ENCODE measurements at regions of chr16 and their contacts with region 1.

Region 1: GRCh38 chr16:3509470-3509928 is 8.7 kb downstream of the CLUAP1 start:
- DNase-seq: peak; percentile 92
- ATAC-seq: peak; percentile 89
- H3K4me3 Mint-ChIP-seq: no peak overlapping the region
- H3K27ac Mint-ChIP-seq: peak overlapping the region; percentile 86
- H3K4me1 Mint-ChIP-seq: peaks cover 56% of the 10 kb centered on the region
- H3K27me3 Mint-ChIP-seq: no peaks in the 10 kb centered on the region
- CTCF ChIP-seq: no peak

Region 2: DNA sequence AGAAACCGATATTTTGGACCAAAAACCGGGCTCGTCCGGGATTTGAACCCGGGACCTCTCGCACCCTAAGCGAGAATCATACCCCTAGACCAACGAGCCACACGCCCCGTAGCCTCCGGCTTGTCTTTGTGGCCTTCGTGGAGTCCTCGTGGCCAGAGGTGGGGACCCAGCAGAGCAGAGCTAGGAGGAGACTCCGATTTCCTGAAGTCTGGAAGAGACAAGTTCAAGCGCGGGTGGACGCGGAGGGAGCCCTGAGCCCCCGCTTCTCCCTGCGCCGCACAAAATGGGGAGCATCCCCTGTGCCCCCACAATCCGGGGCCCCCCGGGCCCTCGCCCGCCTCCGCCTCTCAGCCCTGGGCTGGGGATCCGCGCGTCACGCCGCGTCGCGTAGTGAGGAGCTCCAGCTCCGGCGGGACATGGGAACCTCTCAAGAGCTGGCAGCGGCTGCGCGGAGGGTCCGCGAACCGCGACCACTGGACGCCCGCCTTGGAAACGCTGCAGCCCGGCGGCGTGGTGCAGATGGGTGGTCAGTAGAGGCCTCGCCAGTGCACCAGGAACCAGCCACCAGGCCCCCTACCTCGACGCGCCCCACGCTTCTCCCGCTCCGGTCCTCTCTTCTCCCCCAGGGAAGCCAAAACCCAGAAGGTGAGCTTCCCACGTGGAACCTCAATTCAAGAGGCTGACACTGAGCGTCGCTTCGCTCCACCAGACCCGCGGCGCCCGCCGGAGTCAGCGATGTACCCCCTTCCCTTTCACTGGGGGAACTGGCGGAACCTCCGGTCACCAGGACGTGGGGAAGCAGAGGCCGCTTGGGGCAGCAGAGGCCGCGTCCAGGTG is 326.7 kb before region 1 on chr16:
- CTCF ChIA-PET with region 1: no interaction called
- POLR2A ChIA-PET with region 1: no interaction called
- intact Hi-C with region 1: loop called (anchors 10 kb)
- DNase-seq: peak; percentile 75
- ATAC-seq: peak; percentile 65
- H3K4me3 Mint-ChIP-seq: peak overlapping the region; percentile 83
- H3K27ac Mint-ChIP-seq: peak overlapping the region; percentile 62
- H3K4me1 Mint-ChIP-seq: peaks cover 25% of the 10 kb centered on the region
- H3K27me3 Mint-ChIP-seq: peaks cover 66% of the 10 kb centered on the region
- CTCF ChIP-seq: peak; percentile 47

Region 3: DNA sequence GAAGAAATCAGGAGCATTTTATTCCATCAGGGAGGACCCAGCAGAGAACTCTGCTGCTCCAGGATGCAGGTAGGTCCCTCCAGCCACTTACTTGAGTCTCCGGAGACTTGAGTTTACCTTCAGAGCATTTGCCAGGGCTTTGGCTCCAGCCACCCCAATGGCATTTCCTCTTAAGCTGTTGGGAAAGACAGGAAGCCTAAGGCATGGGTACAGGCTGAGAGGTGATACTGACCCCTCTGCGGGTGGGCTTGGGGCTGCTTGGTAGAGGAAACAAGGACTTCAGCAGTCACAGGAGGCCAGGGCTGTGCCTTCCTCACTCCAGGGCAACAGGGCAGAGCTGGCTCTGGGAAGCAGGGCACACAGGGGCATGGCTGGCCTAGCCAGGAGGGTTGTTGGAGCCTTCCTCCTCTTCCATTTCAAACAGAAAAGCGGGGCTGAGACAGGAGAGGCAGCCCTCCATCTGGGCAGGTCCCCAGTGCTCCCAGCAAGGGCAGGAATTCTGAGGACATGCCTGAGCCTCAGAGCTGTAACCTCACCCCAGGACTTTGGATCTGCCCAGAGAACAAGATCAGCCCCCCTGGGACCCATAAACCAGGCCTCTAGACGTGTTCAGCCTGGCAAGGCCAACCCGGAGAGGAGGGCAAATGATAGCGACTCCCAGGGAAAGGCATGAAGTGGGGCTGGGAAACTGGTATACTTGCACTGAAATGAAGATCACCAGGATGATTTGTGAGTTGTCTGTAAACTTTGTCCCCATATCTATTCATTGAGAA is 33.3 kb after region 1 on chr16:
- CTCF ChIA-PET with region 1: no interaction called
- POLR2A ChIA-PET with region 1: no interaction called
- intact Hi-C with region 1: no loop called
- DNase-seq: no peak
- ATAC-seq: no peak
- H3K4me3 Mint-ChIP-seq: no peak overlapping the region
- H3K27ac Mint-ChIP-seq: peak overlapping the region; percentile 16
- H3K4me1 Mint-ChIP-seq: no peaks in the 10 kb centered on the region
- H3K27me3 Mint-ChIP-seq: no peaks in the 10 kb centered on the region
- CTCF ChIP-seq: no peak

Region 4: GRCh38 chr16:3578610-3579551 is 69.4 kb after region 1 on chr16:
- CTCF ChIA-PET with region 1: no interaction called
- POLR2A ChIA-PET with region 1: no interaction called
- intact Hi-C with region 1: loop called (anchors 10 kb)
- DNase-seq: peak; percentile 93
- ATAC-seq: peak; percentile 64
- H3K4me3 Mint-ChIP-seq: peak overlapping the region; percentile 99
- H3K27ac Mint-ChIP-seq: peak overlapping the region; percentile 98
- H3K4me1 Mint-ChIP-seq: peaks cover 39% of the 10 kb centered on the region
- H3K27me3 Mint-ChIP-seq: no peaks in the 10 kb centered on the region
- CTCF ChIP-seq: no peak

Measured in activated CD8-positive, alpha-beta T cell treated with anti-CD3 and anti-CD28 coated beads for 36 hours (primary cell).